ENCODE measurements at regions of chr12 and their contacts with region 1.

Region 1: GRCh38 chr12:32302218-32303173 is 96.9 kb upstream of the FGD4 start:
- DNase-seq: no peak
- ATAC-seq: no peak
- H3K4me3 ChIP-seq: no peak overlapping the region
- H3K27ac ChIP-seq: no peak overlapping the region
- H3K4me1 ChIP-seq: peaks cover 0 to 3% of the 10 kb centered on the region in 2 donors
- H3K27me3 ChIP-seq: no peaks in the 10 kb centered on the region
- CTCF ChIP-seq: no peak
- POLR2A ChIP-seq: no peak

Region 2: GRCh38 chr12:32069071-32069470 is 233.4 kb before region 1 on chr12:
- in situ Hi-C with region 1: loop called in 3 of 4 experiments (anchors 10 kb)
- intact Hi-C with region 1: no loop called
- DNase-seq: no peak
- ATAC-seq: no peak
- H3K4me3 ChIP-seq: no peak overlapping the region
- H3K27ac ChIP-seq: no peak overlapping the region
- H3K4me1 ChIP-seq: no peaks in the 10 kb centered on the region
- H3K27me3 ChIP-seq: no peaks in the 10 kb centered on the region
- CTCF ChIP-seq: no peak
- POLR2A ChIP-seq: no peak

Measured in gastrocnemius medialis (tissue), 4 donors.